Activated CD4-positive, alpha-beta T cell treated with anti-CD3 and anti-CD28 coated beads for 36 hours (primary cell): ENCODE measurements at regions of chr7 and their contacts with region 1.

Region 1: DNA sequence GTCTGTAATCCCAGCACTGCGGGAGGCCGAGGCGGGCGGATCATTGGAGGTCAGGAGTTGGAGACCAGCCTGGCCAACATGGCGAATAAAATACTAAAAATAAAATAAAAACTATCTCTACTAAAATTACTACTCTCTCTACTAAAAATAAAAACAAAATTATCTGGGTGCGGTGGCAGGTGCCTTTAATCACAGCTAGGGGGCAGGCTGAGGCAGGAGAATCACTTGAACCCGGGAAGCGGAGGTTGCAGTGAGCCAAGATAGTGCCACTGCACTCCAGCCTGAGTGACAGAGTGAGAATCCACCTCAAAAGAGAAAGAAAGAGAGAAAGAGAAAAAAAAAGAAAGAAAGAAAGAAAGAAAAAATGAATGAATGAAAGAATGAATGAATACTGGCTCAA is 351.4 kb downstream of the ELMO1 start:
- DNase-seq: no peak
- ATAC-seq: no peak
- H3K4me3 Mint-ChIP-seq: no peak overlapping the region
- H3K27ac Mint-ChIP-seq: no peak overlapping the region
- H3K4me1 Mint-ChIP-seq: peaks cover 31% of the 10 kb centered on the region
- H3K27me3 Mint-ChIP-seq: no peaks in the 10 kb centered on the region

Region 2: DNA sequence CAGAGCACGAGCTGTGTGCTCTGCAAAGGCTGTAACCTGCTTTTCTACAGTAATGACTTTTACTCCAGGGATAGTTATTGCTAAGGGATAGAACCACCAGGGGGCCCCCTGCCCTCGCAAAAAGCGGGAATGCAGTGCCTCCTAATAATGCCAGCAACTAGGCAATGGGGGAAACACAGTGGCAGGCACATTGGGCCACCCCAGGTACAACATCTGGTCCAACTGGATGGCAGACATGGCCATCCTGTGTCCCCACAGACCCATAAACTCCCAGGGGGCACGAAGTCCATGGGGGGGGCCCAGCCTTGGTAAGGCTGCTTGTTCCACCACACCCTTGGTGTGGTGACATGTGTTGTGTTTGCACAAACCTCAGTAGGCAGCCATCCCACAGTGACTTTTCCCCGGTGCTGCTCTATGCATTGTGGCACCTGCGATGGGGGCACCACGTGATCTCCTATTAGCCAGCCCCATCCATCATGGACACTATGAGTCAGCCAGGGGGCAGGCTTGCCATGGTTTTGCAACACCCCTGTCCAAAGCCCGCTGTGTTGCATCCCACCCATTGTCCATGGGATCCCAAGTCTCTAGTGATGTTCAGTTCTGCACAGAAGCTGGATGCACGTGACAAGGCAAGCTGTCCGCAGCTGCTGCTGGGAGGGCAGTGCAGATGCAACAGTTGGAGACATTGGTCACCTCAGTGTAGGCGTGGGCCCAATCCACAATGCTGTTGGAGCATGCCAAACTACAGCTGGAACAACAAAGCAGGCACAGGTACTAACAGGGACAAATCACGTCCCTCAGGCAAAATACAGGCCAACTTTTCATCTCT is 623.6 kb before region 1 on chr7:
- CTCF ChIA-PET with region 1: no interaction called
- POLR2A ChIA-PET with region 1: no interaction called
- intact Hi-C with region 1: loop called in 1 of 2 experiments (anchors 5 kb)
- DNase-seq: peak; percentile 69
- ATAC-seq: no peak
- H3K4me3 Mint-ChIP-seq: no peak overlapping the region
- H3K27ac Mint-ChIP-seq: no peak overlapping the region
- H3K4me1 Mint-ChIP-seq: peaks cover 14% of the 10 kb centered on the region
- H3K27me3 Mint-ChIP-seq: no peaks in the 10 kb centered on the region

Region 3: GRCh38 chr7:36943591-36944435 is 153.5 kb before region 1 on chr7:
- CTCF ChIA-PET with region 1: no interaction called
- POLR2A ChIA-PET with region 1: no interaction called
- intact Hi-C with region 1: no loop called
- DNase-seq: no peak
- ATAC-seq: no peak
- H3K4me3 Mint-ChIP-seq: no peak overlapping the region
- H3K27ac Mint-ChIP-seq: no peak overlapping the region
- H3K4me1 Mint-ChIP-seq: peaks cover 24% of the 10 kb centered on the region
- H3K27me3 Mint-ChIP-seq: no peaks in the 10 kb centered on the region